AG04449 (cell line): ENCODE measurements at regions of chr5 and their contacts with region 1.

Region 1: DNA sequence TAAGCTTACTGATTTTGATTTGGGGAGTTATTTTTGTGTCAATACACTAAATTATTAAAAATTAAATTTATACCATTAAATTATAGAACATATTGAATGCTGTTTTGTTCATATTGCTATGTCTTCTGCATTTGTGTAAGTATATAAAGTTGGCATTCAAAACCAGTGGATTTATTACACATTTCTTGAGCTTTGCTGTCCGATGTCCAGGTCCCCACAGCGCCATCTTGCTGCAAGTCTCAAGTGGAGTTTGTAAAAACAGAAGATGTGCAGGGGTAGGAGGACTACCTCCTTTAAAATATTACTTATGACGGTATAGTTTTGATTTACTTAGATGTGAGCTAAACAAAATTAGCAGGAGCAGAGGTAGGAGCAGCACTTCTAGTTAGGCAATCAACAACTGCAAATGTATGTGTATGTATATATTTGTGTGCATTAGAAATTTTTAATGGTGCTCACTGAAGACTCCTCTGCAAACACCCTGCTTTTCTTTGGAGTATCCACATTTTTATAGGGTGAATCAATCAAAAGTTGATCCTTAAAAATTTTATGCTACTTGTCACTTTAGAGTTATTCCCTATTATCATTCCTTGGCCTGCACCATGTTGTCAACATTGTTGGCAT is 37.4 kb downstream of the CPEB4 start:
- DNase-seq: no peak
- H3K4me3 ChIP-seq: no peak overlapping the region
- CTCF ChIP-seq: peak; percentile 57

Region 2: DNA sequence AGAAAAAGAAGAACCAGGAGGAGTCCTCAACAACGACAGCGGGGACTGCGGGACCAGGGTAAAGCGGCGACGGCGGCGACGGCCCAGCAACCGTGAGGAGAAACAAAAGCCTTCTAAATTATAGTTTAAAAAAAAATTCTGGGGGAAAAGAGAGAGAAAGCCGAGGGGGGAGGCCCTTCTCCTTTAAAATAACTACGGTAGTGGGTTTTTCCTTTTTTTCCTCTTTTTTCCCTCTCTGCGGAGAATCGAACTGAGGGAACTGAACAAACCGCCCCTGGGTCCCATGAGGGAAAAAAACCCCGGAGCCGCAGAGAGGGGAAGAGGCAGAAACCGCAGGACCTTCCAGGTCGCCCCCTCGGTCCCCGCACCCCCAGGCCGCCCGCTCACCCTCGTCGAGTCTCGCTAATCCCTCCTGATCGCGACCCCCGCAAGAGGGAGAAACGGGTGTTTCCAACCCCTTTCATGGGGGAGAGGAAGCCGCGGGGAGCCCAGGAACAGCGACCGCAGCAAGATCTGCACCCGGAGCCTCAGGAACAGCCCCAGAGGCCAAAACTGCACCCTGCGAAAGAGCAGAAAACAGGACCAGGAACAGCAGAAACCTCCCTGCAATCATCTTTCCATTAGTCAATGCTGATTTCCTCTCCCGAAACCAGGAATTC is 37.0 kb before region 1 on chr5:
- CTCF ChIA-PET with region 1: interaction called, 15 read pairs
- POLR2A ChIA-PET with region 1: interaction called, 4 read pairs
- DNase-seq: no peak
- H3K4me3 ChIP-seq: peak overlapping the region; percentile 62
- CTCF ChIP-seq: no peak

Region 3: DNA sequence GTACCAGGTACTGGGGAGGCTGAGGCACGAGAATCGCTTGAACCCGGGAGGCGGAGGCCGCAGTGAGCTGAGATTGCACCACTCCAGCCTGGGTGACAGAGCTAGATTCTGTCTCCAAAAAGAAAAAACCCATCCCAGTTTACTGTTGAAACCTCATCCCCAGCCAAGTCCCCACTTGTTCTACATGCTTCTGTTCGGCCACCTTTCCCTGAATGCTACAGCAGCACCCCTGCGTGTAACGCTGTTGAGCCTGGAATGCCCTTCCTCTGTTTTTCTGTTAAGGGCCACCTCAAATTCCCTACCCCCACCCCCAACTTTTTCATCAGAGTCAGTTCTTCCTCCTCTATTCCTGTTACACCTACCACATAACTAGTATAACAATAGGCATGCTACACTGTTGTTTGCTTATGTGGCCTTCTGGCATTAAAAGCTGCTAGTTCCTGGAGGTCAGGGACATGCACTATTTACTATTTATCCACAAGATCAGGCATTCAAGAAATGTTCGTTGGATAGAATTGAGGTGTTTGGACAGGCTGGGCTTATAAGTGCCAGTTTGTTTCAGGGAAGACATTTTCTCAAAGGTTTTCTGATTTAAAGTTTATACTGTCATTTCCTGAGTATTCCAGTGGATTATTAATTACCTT is 16.3 kb after region 1 on chr5:
- CTCF ChIA-PET with region 1: interaction called, 59 read pairs
- POLR2A ChIA-PET with region 1: no interaction called
- DNase-seq: no peak
- H3K4me3 ChIP-seq: no peak overlapping the region
- CTCF ChIP-seq: no peak

Region 4: DNA sequence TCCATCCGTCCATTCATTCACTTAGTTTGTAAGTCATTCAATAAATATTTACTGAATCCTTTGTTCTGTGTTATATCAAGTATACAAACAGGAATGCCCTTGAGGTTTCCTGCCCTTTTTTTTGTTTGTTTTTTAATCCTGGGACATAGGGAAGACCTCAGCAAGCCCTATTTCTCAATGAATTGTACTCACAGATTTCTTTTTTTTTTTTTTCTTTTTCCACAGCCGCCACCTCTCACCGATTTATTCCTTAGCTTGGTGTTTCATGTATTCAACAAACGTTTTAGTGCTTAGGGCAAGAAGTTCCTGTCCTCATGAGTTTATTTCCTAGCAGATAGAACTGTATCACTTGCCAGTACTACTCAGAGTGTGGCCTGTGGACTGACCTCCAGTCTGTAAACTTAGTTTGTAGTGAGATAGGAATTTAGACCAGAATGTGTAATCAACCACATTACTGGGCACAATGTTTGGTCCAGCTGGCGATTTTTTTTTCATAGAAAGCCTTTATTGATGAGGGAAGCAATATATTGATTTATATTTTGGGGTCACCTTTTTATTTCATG is 28.0 kb after region 1 on chr5:
- CTCF ChIA-PET with region 1: interaction called, 10 read pairs
- POLR2A ChIA-PET with region 1: no interaction called
- DNase-seq: no peak
- H3K4me3 ChIP-seq: no peak overlapping the region
- CTCF ChIP-seq: no peak